Calu3 (cell line): ENCODE measurements at regions of chr5 and their contacts with region 1.

Region 1: DNA sequence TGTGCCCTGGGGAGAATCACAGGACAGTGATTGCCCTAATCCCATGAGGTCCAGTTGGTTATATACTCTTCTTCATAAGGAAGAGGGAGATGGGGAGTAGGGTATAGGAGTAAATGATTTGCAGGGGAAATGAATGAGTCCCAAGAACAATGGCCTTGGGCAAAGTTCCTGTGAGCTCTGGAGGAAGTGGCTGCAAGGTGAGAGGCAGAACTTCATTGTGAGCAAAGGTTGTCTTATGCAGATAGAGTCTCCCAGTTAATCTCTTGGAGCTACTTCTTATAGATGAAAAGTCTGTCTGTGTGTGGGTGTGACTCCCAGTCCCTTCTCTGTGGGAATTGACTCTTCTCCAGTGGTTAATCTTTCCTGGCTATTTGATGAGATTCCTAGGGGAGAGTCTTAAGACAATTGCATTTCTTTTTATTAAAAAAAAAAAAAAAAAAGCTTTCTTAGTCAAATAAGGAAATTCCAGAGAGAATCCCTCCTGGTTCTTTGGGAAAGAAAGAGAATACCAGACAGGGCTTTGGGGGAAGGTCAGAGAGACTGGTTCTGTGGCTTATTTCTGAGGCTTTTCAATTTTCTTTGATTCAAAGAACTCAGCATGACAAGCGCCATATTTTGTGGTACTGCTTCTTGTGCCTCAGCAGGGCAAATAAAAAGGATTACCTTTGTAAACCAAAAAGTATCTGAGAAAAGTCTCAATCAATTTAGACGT is 33.6 kb upstream of the MEGF10 start:
- DNase-seq: no peak
- H3K4me3 Mint-ChIP-seq: no peak overlapping the region
- H3K27ac Mint-ChIP-seq: no peak overlapping the region
- H3K4me1 Mint-ChIP-seq: no peaks in the 10 kb centered on the region
- H3K27me3 Mint-ChIP-seq: no peaks in the 10 kb centered on the region
- CTCF ChIP-seq: no peak

Region 2: DNA sequence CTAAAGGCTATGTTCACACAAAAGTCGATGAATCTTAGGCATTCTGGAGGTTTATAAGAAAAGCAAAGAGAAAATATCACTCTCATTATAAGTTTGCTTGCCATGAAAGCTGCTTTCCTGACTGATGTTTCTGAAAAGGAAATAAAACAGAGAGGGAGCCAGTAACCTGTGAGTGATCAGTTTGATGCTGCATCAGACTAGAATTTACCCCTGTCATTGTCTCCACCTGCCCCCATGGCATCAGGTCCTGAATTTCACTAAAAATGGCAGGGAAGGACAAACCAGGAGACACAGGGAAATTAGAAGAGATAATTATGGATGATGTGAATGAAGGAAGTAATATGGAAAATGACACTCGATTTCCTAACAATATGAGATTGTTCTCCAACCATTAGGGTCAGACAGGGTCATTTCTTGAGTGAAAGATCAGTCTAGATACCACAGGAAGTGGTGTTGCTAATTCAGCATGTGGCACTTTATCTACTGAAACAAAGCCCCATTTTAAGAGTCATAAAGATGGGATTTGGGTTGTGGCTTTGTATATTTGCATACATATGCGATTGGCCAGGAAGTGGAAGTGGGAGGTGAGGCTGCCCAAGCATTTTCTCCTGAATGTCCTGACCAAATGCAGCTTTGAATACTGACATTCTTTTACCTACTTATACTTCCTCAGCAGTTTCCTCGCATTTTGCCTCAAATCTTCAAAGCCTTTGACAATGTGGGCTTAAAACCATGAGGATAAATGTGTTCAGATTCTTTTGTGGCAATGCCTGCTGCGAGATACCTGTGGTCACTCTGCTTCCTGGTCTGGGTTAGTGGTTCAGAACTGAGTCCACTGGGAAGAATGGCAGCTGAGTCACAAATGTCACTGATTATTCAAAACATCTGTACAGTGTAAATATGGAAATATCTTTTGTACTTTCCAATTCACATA is 63.3 kb after region 1 on chr5:
- CTCF ChIA-PET with region 1: no interaction called
- intact Hi-C with region 1: no loop called
- DNase-seq: peak; percentile 42
- H3K4me3 Mint-ChIP-seq: no peak overlapping the region
- H3K27ac Mint-ChIP-seq: peak overlapping the region; percentile 6
- H3K4me1 Mint-ChIP-seq: peaks cover 9% of the 10 kb centered on the region
- H3K27me3 Mint-ChIP-seq: no peaks in the 10 kb centered on the region
- CTCF ChIP-seq: no peak

Region 3: DNA sequence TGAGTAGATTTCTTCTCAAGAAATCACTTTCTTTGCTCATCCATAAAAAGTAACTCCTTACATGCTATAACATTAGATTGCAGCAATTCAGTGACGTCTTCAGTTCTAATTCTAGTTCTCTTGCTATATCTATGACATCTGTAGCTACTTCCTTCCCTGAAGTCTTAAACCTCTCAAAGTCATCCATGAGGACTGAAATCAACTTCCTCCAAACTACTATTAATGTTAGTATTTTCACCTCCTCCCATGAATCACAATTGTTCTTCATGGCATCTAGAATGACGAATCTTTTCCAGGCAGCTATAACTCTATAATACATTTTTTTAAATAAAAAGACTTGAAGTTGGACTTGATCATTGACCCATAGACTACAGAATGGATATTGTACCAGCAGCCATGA is 214.2 kb after region 1 on chr5:
- CTCF ChIA-PET with region 1: interaction called, 10 read pairs
- intact Hi-C with region 1: no loop called
- DNase-seq: no peak
- H3K4me3 Mint-ChIP-seq: no peak overlapping the region
- H3K27ac Mint-ChIP-seq: no peak overlapping the region
- H3K4me1 Mint-ChIP-seq: no peaks in the 10 kb centered on the region
- H3K27me3 Mint-ChIP-seq: no peaks in the 10 kb centered on the region
- CTCF ChIP-seq: no peak